ENCODE measurements at regions of chr7 and their contacts with region 1.

Region 1: GRCh38 chr7:73312831-73313526 is 4.4 kb upstream of the NSUN5 start:
- DNase-seq: no peak
- ATAC-seq: peak in 1 of 8 donors; percentile 31
- H3K4me3 ChIP-seq: no peak overlapping the region
- H3K27ac ChIP-seq: no peak overlapping the region
- H3K4me1 ChIP-seq: peaks cover 0 to 12% (median 5%) of the 10 kb centered on the region in 9 donors
- H3K27me3 ChIP-seq: no peaks in the 10 kb centered on the region
- CTCF ChIP-seq: no peak

Region 2: DNA sequence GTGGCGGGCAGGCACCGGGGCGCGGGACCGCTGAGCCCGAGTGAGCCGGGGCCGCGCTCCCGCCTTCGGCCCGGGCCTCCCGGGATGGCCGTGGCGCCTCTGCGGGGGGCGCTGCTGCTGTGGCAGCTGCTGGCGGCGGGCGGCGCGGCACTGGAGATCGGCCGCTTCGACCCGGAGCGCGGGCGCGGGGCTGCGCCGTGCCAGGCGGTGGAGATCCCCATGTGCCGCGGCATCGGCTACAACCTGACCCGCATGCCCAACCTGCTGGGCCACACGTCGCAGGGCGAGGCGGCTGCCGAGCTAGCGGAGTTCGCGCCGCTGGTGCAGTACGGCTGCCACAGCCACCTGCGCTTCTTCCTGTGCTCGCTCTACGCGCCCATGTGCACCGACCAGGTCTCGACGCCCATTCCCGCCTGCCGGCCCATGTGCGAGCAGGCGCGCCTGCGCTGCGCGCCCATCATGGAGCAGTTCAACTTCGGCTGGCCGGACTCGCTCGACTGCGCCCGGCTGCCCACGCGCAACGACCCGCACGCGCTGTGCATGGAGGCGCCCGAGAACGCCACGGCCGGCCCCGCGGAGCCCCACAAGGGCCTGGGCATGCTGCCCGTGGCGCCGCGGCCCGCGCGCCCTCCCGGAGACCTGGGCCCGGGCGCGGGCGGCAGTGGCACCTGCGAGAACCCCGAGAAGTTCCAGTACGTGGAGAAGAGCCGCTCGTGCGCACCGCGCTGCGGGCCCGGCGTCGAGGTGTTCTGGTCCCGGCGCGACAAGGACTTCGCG is 121.1 kb after region 1 on chr7:
- intact Hi-C with region 1: loop called in 1 of 10 experiments (anchors 10 kb)
- DNase-seq: no peak
- ATAC-seq: peak in 2 of 8 donors; percentile 5 to 13
- H3K4me3 ChIP-seq: peak overlapping the region in 8 of 10 donors; percentile 26 to 48 (median 42)
- H3K27ac ChIP-seq: no peak overlapping the region
- H3K4me1 ChIP-seq: peaks cover 0 to 13% (median 4%) of the 10 kb centered on the region in 9 donors
- H3K27me3 ChIP-seq: peaks cover 0 to 42% (median 31%) of the 10 kb centered on the region in 7 donors
- CTCF ChIP-seq: no peak